Posterior vena cava (tissue), 2 donors: ENCODE measurements at regions of chr6 and their contacts with region 1.

Region 1: GRCh38 chr6:113660819-113661218 is 196.3 kb upstream of the MARCKS start:
- DNase-seq: no peak

Region 2: GRCh38 chr6:113619077-113619476 is 41.7 kb before region 1 on chr6:
- intact Hi-C with region 1: loop called in 1 of 2 experiments (anchors 2 kb)
- DNase-seq: no peak